ENCODE measurements at regions of chr9 and their contacts with region 1.

Region 1: DNA sequence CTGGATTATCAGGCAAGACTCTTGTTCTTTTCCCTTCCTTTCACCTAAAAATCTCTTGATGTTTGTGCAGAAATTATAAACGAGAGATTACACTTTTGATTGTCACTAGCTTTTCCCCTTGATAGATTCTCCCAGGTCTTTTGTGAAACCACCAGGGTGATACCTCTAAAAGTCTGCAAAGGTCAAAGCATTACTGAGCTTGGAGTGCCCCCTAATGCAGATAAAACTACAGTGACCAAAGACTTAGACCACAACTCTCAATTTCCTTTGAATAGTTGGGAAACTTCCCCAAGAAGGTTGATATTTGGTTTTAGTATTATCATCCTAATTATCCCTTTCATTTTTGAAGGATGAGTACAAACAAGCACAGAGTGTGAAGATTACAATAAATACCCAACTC is 173.1 kb downstream of the CYLC2 start:
- DNase-seq: no peak

Region 2: DNA sequence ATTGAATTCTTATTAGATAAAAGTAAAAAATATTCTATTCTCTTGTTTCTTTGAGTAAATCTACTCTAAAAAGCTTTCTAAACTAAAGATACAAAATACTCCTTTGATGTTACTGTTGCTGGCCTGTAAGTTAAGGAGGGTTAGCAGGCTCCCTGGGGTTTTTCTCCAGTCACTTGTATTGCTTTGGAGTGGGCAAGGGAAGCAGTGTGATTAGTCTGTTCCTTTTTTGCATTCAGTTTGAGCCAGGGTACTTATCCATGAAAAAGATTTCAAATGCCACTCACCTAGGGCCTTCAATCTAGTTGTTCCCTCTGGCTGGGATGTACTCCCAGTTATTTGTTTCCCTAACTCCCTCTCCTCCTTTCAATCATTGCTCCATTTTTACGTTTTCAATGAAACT is 669.7 kb after region 1 on chr9:
- intact Hi-C with region 1: loop called in 1 of 2 experiments (anchors 5 kb)
- DNase-seq: no peak